Activated B cell treated with CpG ODN at 0.5 μM for 24 hours (primary cell): ENCODE measurements at regions of chr12 and their contacts with region 1.

Region 1: GRCh38 chr12:55926738-55927587 is 731 bp downstream of the PYM1 start:
- DNase-seq: peak; percentile 84
- ATAC-seq: peak; percentile 48
- H3K4me3 Mint-ChIP-seq: peak overlapping the region; percentile 98
- H3K27ac Mint-ChIP-seq: peak overlapping the region; percentile 98
- H3K4me1 Mint-ChIP-seq: peaks cover 67% of the 10 kb centered on the region
- H3K27me3 Mint-ChIP-seq: no peaks in the 10 kb centered on the region
- CTCF ChIP-seq: peak; percentile 50

Region 2: GRCh38 chr12:55673638-55674037 is 253.3 kb before region 1 on chr12:
- CTCF ChIA-PET with region 1: no interaction called
- POLR2A ChIA-PET with region 1: no interaction called
- intact Hi-C with region 1: loop called (anchors 5 kb)
- DNase-seq: no peak
- ATAC-seq: peak; percentile 99
- H3K4me3 Mint-ChIP-seq: peak overlapping the region; percentile 21
- H3K27ac Mint-ChIP-seq: peak overlapping the region; percentile 90
- H3K4me1 Mint-ChIP-seq: peaks cover 28% of the 10 kb centered on the region
- H3K27me3 Mint-ChIP-seq: no peaks in the 10 kb centered on the region
- CTCF ChIP-seq: no peak

Region 3: GRCh38 chr12:55829967-55830600 is 96.9 kb before region 1 on chr12:
- CTCF ChIA-PET with region 1: interaction called, 5 read pairs
- POLR2A ChIA-PET with region 1: interaction called, 70 read pairs
- intact Hi-C with region 1: loop called (anchors 1 kb)
- DNase-seq: peak; percentile 32
- ATAC-seq: peak; percentile 13
- H3K4me3 Mint-ChIP-seq: peak overlapping the region; percentile 97
- H3K27ac Mint-ChIP-seq: peak overlapping the region; percentile 91
- H3K4me1 Mint-ChIP-seq: peaks cover 51% of the 10 kb centered on the region
- H3K27me3 Mint-ChIP-seq: no peaks in the 10 kb centered on the region
- CTCF ChIP-seq: no peak

Region 4: GRCh38 chr12:55973598-55974307 is 46.8 kb after region 1 on chr12 and contains the start of gene RAB5B:
- CTCF ChIA-PET with region 1: interaction called, 5 read pairs
- POLR2A ChIA-PET with region 1: interaction called, 29 read pairs
- intact Hi-C with region 1: loop called (anchors 1 kb)
- DNase-seq: peak; percentile 83
- ATAC-seq: peak; percentile 87
- H3K4me3 Mint-ChIP-seq: no peak within 1 kb of the TSS
- H3K27ac Mint-ChIP-seq: no peak within 1 kb of the TSS
- H3K4me1 Mint-ChIP-seq: peaks cover 27% of the 10 kb centered on the region
- H3K27me3 Mint-ChIP-seq: no peaks in the 10 kb centered on the region
- CTCF ChIP-seq: no peak
- total RNA-seq, gene RAB5B: 82.1 and 83.8 TPM in 2 replicates

Region 5: GRCh38 chr12:56041552-56042429 is 114.8 kb after region 1 on chr12 and contains the start of gene RPS26:
- CTCF ChIA-PET with region 1: no interaction called
- POLR2A ChIA-PET with region 1: interaction called, 4 read pairs
- intact Hi-C with region 1: loop called (anchors 1 kb)
- DNase-seq: peak; percentile 77
- ATAC-seq: peak; percentile 93
- H3K4me3 Mint-ChIP-seq: peak within 1 kb of the TSS; percentile 99
- H3K27ac Mint-ChIP-seq: peak within 1 kb of the TSS; percentile 98
- H3K4me1 Mint-ChIP-seq: peaks cover 33% of the 10 kb centered on the region
- H3K27me3 Mint-ChIP-seq: no peaks in the 10 kb centered on the region
- CTCF ChIP-seq: no peak
- total RNA-seq, gene RPS26: 23.9 and 28.1 TPM in 2 replicates

Region 6: DNA sequence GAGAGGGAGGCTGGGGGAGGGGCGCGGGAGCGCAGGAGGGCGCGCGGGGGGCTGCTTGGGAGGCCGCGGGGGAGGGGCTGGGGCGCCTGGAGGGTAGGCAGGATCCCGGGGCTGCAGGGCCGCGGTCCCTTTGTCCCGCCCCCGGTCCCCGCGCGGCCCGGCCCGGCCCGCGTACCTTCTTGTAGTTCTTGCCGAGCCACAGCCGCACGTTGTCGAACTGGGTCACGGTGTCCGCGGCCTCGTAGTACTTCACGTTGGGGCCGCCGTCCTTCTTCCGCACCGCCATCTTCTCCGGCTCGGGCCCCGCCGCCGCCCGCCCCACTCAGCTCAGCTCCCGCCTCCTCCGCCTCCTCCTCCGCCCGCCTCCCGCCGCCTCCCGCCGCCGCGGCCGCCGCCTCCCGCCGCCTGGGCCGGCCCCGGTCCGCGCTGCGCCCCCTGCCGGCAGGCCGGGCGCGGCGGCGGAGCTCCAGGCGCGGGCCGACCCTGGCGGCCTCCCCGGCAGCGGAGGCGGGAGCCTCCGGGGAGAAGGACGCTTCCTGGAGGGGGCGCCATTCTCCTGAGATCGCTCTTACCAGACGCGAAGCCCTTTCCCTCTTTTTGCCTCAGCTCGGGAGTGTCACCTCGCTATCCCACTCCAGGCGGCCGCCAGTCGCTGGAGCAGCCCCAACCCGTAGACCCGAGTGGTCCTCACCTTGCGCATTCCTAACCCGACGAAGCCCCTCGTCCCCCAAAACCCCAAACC is 262.4 kb after region 1 on chr12 and contains the start of gene SMARCC2:
- CTCF ChIA-PET with region 1: no interaction called
- POLR2A ChIA-PET with region 1: no interaction called
- intact Hi-C with region 1: no loop called
- DNase-seq: peak; percentile 82
- ATAC-seq: peak; percentile 81
- H3K4me3 Mint-ChIP-seq: peak within 1 kb of the TSS; percentile 95
- H3K27ac Mint-ChIP-seq: peak within 1 kb of the TSS; percentile 96
- H3K4me1 Mint-ChIP-seq: peaks cover 43% of the 10 kb centered on the region
- H3K27me3 Mint-ChIP-seq: no peaks in the 10 kb centered on the region
- CTCF ChIP-seq: no peak
- total RNA-seq, gene SMARCC2: 109 and 136 TPM in 2 replicates

Region 7: DNA sequence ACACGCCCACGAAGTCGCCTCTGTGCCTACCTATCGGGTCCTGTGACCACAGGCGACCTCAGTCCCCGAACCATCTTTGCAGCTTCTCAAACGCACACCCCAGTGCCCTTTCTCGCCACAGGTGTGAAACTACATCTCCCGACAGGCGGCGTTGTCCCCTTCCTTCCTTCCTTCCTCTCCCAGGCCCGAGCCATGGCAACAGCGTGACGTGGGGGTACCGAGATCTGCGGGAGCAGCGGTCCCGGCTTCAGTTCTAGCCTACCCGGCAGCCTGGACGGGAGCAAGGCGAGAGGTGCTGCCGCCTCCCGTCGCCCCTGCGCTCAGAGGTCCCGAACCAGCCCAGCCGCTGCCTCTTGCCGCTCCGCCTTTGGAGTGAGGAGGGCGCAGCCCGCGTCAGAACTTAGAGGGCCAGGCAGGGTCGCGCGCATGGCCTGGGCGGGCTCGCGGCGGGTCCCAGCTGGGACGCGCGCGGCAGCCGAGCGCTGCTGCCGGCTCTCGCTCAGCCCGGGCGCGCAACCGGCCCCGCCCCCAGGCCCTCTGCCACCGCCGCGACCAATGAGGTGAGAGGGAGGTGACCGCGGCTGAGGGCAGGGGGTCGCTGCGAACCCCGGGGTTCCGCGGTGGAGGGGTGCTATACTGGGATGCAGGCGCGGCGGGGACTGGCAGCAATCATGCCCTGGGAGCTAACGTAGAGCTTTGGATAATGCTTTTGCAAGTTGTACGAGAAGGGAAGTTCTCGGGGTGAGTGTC is 339.9 kb after region 1 on chr12 and contains the start of gene COQ10A:
- CTCF ChIA-PET with region 1: no interaction called
- POLR2A ChIA-PET with region 1: no interaction called
- intact Hi-C with region 1: loop called (anchors 2 kb)
- DNase-seq: peak; percentile 90
- ATAC-seq: peak; percentile 90
- H3K4me3 Mint-ChIP-seq: peak within 1 kb of the TSS; percentile 93
- H3K27ac Mint-ChIP-seq: peak within 1 kb of the TSS; percentile 93
- H3K4me1 Mint-ChIP-seq: peaks cover 18% of the 10 kb centered on the region
- H3K27me3 Mint-ChIP-seq: no peaks in the 10 kb centered on the region
- CTCF ChIP-seq: no peak
- total RNA-seq, gene COQ10A: 30.2 and 35.6 TPM in 2 replicates

Region 8: DNA sequence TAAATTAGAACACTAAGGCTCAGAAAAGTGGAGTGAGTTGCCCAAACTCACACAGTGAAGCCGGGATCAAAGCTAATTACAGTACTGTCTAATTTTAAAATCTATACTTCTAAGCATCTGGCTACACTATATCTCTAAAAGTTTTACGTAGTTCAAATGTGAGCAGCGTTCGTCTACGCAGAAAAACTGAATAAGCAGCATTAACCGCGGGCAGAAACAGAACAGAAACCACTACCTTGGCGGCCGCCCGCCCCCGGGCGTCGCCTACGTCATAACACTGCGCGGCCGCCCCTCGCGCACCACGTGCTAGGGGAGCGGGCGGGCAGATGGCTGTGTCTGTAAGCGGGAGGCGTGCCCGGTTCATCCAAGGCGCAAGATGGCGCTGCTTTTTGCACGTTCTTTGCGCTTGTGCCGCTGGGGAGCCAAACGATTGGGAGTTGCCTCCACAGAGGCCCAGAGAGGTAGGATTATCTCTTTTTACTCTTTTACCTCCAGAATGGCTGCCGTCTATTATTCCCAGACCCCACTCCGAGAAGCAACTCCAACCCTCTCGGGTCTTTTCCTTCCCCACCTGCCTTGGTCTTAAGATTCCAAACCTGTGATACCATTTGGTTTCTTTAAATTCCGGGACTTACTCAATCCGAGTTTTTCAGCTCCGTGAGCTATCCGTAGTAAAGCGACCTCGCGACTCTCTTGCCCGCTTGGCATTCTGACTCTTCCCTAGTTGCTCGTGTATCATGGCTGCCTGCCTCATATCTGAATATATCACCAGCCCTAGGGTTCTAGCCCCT is 541.4 kb after region 1 on chr12 and contains the start of gene SPRYD4:
- CTCF ChIA-PET with region 1: no interaction called
- POLR2A ChIA-PET with region 1: no interaction called
- intact Hi-C with region 1: loop called (anchors 1 kb)
- DNase-seq: peak; percentile 92
- ATAC-seq: peak; percentile 90
- H3K4me3 Mint-ChIP-seq: peak within 1 kb of the TSS; percentile 94
- H3K27ac Mint-ChIP-seq: peak within 1 kb of the TSS; percentile 94
- H3K4me1 Mint-ChIP-seq: peaks cover 36% of the 10 kb centered on the region
- H3K27me3 Mint-ChIP-seq: no peaks in the 10 kb centered on the region
- CTCF ChIP-seq: no peak
- total RNA-seq, gene SPRYD4: 5.8 and 7.5 TPM in 2 replicates